Activated T-helper 2 cell treated with anti-CD3 and anti-CD28 coated beads, Interferon-gamma antibody, Interleukin-2, Interleukin-4, amounts not matched to agents 10 μg/mL and 5 μg/mL and 100 μg/mL, durations not matched to agents 14 hours and 24 hours and 36 hours (primary cell): ENCODE measurements at regions of chr6 and their contacts with region 1.

Region 1: DNA sequence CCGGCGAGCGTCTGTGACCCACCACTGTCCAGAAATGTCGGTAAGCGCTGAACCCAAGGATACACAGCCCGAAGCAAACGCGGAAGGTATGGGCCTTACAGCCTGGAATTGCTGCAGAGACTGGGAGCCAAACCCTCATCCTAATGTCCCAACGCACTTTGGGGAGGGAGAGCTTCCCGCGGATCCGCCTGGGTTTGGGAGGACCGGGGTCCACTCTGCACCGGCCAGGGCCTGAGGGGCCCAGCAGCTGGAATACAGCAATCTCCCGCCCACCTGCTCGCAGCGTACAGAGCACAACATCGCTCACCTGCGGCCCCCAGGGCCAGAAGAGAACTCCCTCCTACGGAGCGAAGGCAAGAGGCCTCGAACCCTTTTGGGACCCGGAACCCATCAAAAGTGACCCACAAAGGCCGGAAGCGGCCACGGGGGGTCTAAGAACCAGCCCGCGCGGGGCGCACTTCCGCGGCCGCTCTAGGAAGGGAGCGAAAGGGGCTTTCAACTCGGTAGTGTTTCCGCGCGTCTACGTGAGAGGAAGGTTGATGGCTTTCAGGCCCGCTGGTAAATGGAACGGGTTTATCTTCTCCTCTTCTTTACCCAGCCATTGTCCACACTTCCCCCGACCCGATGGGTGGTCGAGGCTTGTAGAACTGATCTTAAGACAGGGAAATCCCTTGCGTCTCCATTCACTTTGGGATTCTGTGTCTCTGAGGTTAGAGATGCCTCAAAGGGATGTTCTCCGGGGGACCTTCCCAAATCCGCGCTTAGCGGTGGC is at the start of gene ZSCAN12:
- DNase-seq: peak; percentile 74
- H3K4me3 Mint-ChIP-seq: peak within 1 kb of the TSS; percentile 90
- H3K27ac Mint-ChIP-seq: peak within 1 kb of the TSS; percentile 73
- H3K4me1 Mint-ChIP-seq: peaks cover 36% of the 10 kb centered on the region
- H3K27me3 Mint-ChIP-seq: peaks cover 34% of the 10 kb centered on the region
- total RNA-seq, gene ZSCAN12: 5.3 and 5.7 TPM in 2 replicates

Region 2: DNA sequence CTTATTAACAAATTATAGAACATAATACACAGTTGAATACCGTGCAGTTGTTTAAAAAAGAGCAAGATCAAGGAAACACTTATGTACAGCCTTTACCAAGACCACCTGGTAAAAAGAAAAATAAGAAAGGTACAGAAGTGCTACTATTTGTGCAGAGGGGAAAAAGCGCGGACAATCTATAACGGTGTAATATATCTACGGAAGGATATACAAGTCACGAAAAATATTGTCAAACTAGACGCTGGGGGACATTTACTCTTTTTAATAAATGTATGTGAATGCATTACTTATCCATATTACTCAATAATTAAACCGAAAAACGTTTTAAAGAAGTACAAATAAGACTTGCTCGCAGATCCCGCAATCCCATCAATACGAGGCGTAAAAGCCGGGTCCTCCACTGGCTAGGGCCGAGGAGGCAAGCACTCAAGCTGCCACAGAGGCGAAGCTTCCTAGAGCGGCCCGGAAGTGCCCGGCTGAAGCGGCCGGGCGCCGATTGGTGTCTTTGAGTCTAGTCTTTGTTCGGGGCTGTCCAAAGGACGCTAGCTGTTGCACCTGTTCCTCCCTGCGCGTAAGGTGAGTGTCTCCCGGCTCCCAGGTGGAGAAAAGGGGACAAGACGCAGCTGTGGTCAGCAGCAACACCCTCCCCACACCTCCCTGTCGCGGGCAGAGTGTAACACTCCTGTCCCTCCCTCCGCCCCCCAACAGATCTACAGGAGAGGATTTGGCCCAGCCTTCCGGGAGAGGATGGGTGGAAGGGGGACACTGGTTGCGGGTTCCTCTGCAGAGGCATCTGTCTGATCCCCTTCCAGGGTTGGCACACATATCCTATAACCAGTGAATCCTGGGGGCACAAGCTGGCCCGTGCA is 275.2 kb before region 1 on chr6 and contains the start of gene ZSCAN16:
- intact Hi-C with region 1: loop called (anchors 1 kb)
- DNase-seq: peak; percentile 68
- H3K4me3 Mint-ChIP-seq: peak within 1 kb of the TSS; percentile 92
- H3K27ac Mint-ChIP-seq: peak within 1 kb of the TSS; percentile 75
- H3K4me1 Mint-ChIP-seq: peaks cover 35% of the 10 kb centered on the region
- H3K27me3 Mint-ChIP-seq: no peaks in the 10 kb centered on the region
- total RNA-seq, gene ZSCAN16: 4.0 TPM in 2 replicates

Region 3: DNA sequence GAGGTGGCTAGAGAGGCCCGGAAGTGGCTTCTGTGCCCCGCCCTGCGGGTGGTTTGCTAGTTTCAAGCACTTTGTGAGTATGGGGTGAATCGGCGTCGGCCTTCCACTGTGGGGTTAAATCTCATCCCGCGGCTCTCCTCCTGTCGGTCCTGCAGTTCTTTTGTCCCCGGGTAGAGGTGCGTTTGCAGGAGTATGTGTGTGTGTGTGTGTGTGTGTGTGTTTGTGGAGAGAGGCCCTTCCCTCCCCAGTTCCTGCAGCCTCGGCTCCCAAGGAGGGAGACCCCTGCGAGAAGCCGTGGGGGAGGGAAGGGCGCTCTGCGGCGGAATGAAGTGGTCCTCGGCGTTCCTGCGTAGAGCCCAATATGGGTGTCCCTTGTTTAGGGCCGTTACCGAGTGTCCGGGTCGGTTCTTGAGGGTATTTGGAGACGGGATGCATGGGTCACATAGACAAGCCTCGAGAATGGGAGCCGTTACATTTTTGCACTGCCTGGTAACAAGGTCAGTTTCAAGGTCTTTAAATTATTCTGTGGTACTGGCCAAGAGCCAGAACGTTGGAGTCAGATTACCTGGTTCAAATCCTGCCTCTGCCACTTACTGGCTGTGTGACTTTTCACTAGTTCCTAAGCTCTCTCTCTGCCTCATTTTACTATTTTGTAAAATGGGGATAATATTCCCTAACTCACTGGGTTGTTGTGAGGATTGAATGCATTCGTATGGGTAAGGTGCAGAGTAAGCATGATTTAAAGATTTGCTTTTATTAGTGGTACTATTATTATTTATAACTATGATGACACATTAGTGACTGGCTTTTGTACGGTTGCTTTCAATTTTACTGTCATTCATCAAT is 49.4 kb before region 1 on chr6 and contains the start of gene ZKSCAN3:
- intact Hi-C with region 1: loop called (anchors 5 kb)
- DNase-seq: peak; percentile 81
- H3K4me3 Mint-ChIP-seq: peak within 1 kb of the TSS; percentile 99
- H3K27ac Mint-ChIP-seq: peak within 1 kb of the TSS; percentile 93
- H3K4me1 Mint-ChIP-seq: peaks cover 22% of the 10 kb centered on the region
- H3K27me3 Mint-ChIP-seq: peaks cover 21% of the 10 kb centered on the region
- total RNA-seq, gene ZKSCAN3: 3.5 TPM in 2 replicates

Region 4: GRCh38 chr6:28443112-28443773 is 43.7 kb after region 1 on chr6 and contains the start of gene ZSCAN23:
- intact Hi-C with region 1: loop called (anchors 1 kb)
- DNase-seq: peak; percentile 77
- H3K4me3 Mint-ChIP-seq: peak within 1 kb of the TSS; percentile 87
- H3K27ac Mint-ChIP-seq: peak within 1 kb of the TSS; percentile 44
- H3K4me1 Mint-ChIP-seq: peaks cover 25% of the 10 kb centered on the region
- H3K27me3 Mint-ChIP-seq: peaks cover 34% of the 10 kb centered on the region
- total RNA-seq, gene ZSCAN23: 0.48 and 0.50 TPM in 2 replicates

Region 5: GRCh38 chr6:28462401-28462800 is 62.9 kb after region 1 on chr6:
- intact Hi-C with region 1: no loop called
- DNase-seq: peak; percentile 16
- H3K4me3 Mint-ChIP-seq: no peak overlapping the region
- H3K27ac Mint-ChIP-seq: no peak overlapping the region
- H3K4me1 Mint-ChIP-seq: peaks cover 18% of the 10 kb centered on the region
- H3K27me3 Mint-ChIP-seq: peaks cover 61% of the 10 kb centered on the region

Region 6: GRCh38 chr6:28586962-28587745 is 187.6 kb after region 1 on chr6:
- intact Hi-C with region 1: loop called (anchors 5 kb)
- DNase-seq: peak; percentile 38
- H3K4me3 Mint-ChIP-seq: peak overlapping the region; percentile 78
- H3K27ac Mint-ChIP-seq: no peak overlapping the region
- H3K4me1 Mint-ChIP-seq: peaks cover 27% of the 10 kb centered on the region
- H3K27me3 Mint-ChIP-seq: peaks cover 66% of the 10 kb centered on the region

Region 7: GRCh38 chr6:28868873-28869272 is 469.3 kb after region 1 on chr6:
- intact Hi-C with region 1: no loop called
- DNase-seq: no peak
- H3K4me3 Mint-ChIP-seq: no peak overlapping the region
- H3K27ac Mint-ChIP-seq: no peak overlapping the region
- H3K4me1 Mint-ChIP-seq: peaks cover 29% of the 10 kb centered on the region
- H3K27me3 Mint-ChIP-seq: no peaks in the 10 kb centered on the region